Spleen (tissue), 13 donors: ENCODE measurements at regions of chr1 and their contacts with region 1.

Region 1: GRCh38 chr1:25492323-25492722 is 51.1 kb upstream of the LDLRAP1 start:
- DNase-seq: no peak
- H3K4me3 ChIP-seq: no peak overlapping the region
- H3K27ac ChIP-seq: no peak overlapping the region
- H3K4me1 ChIP-seq: no peaks in the 10 kb centered on the region
- H3K27me3 ChIP-seq: no peaks in the 10 kb centered on the region
- CTCF ChIP-seq: no peak
- POLR2A ChIP-seq: no peak

Region 2: GRCh38 chr1:25442178-25442577 is 50.1 kb before region 1 on chr1:
- intact Hi-C with region 1: loop called (anchors 10 kb)
- DNase-seq: no peak
- H3K4me3 ChIP-seq: no peak overlapping the region
- H3K27ac ChIP-seq: no peak overlapping the region
- H3K4me1 ChIP-seq: peaks cover 0 to 58% (median 3%) of the 10 kb centered on the region in 6 donors
- H3K27me3 ChIP-seq: no peaks in the 10 kb centered on the region
- CTCF ChIP-seq: no peak
- POLR2A ChIP-seq: no peak